K562 (cell line): ENCODE measurements at regions of chr2 and their contacts with region 1.

Region 1: DNA sequence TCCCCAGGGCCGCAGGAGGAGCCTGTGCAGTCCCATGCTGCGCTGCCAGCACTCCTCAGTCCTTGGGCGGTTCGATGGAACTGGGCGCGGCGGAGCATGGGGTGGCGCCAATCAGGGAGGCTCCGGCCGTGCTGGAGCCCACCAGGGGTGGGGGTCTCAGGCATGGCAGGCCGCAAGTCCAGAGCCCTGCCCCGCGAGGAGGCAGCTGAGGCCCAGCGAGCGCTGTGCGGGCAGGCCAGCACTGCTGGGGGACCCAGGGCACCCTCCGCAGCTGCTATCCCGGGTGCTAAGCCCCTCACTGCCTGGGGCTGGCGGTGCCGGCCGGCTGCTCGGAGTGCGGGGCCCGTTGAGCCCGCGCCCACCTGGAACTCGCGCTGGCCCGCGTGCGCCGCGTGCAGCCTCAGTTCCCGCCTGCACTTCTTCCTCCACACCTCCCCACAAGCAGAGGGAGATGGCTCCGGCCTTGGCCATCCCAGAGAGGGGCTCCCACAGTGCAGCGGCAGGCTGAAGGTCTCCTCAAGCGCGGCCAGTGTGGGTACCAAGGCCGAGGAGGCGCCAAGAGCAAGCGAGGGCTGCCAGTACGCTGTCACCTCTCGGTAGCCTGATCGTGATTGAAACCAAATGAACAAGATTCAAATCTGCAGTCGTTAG is 22.8 kb upstream of the GALM start:
- DNase-seq: no peak
- ATAC-seq: no peak; the same call in 1 of the 3 replicates
- H3K4me3 ChIP-seq: no peak overlapping the region
- H3K27ac ChIP-seq: peak overlapping the region; percentile 98
- H3K4me1 ChIP-seq: peaks cover 15 to 20% of the 10 kb centered on the region in 2 experiments; a peak in 4 of 5 replicates
- H3K27me3 ChIP-seq: no peaks in the 10 kb centered on the region
- CTCF ChIP-seq: no peak
- EP300 ChIP-seq: no peak
- POLR2A ChIP-seq: no peak
- RAD21 ChIP-seq: no peak

Region 2: GRCh38 chr2:38615237-38615636 is 27.9 kb before region 1 on chr2:
- CTCF ChIA-PET with region 1: no interaction called
- POLR2A ChIA-PET with region 1: interaction called, 5 read pairs
- in situ Hi-C with region 1: no loop called
- intact Hi-C with region 1: loop called (anchors 1 kb)
- DNase-seq: peak in 3 of 4 experiments; percentile 20 to 40 (median 33)
- ATAC-seq: no peak
- H3K4me3 ChIP-seq: no peak overlapping the region
- H3K27ac ChIP-seq: peak overlapping the region; percentile 64; the same call in 1 of the 3 replicates
- H3K4me1 ChIP-seq: peaks cover 6 to 45% of the 10 kb centered on the region in 2 experiments
- H3K27me3 ChIP-seq: no peaks in the 10 kb centered on the region
- CTCF ChIP-seq: no peak
- EP300 ChIP-seq: peak; percentile 33; the same call in 1 of the 2 replicates
- POLR2A ChIP-seq: no peak
- RAD21 ChIP-seq: no peak

Region 3: GRCh38 chr2:38632980-38633379 is 10.2 kb before region 1 on chr2:
- CTCF ChIA-PET with region 1: no interaction called
- POLR2A ChIA-PET with region 1: no interaction called
- in situ Hi-C with region 1: no loop called
- intact Hi-C with region 1: no loop called
- DNase-seq: no peak
- ATAC-seq: no peak
- H3K4me3 ChIP-seq: no peak overlapping the region
- H3K27ac ChIP-seq: no peak overlapping the region
- H3K4me1 ChIP-seq: peaks cover 0 to 5% of the 10 kb centered on the region in 2 experiments; a peak in 2 of 5 replicates
- H3K27me3 ChIP-seq: no peaks in the 10 kb centered on the region
- CTCF ChIP-seq: no peak
- EP300 ChIP-seq: no peak
- POLR2A ChIP-seq: no peak
- RAD21 ChIP-seq: no peak